ENCODE measurements at regions of chr19 and their contacts with region 1.

Region 1: GRCh38 chr19:58401840-58402469 is 6.5 kb upstream of the ZNF584 start:
- DNase-seq: no peak
- CTCF ChIP-seq: no peak

Region 2: DNA sequence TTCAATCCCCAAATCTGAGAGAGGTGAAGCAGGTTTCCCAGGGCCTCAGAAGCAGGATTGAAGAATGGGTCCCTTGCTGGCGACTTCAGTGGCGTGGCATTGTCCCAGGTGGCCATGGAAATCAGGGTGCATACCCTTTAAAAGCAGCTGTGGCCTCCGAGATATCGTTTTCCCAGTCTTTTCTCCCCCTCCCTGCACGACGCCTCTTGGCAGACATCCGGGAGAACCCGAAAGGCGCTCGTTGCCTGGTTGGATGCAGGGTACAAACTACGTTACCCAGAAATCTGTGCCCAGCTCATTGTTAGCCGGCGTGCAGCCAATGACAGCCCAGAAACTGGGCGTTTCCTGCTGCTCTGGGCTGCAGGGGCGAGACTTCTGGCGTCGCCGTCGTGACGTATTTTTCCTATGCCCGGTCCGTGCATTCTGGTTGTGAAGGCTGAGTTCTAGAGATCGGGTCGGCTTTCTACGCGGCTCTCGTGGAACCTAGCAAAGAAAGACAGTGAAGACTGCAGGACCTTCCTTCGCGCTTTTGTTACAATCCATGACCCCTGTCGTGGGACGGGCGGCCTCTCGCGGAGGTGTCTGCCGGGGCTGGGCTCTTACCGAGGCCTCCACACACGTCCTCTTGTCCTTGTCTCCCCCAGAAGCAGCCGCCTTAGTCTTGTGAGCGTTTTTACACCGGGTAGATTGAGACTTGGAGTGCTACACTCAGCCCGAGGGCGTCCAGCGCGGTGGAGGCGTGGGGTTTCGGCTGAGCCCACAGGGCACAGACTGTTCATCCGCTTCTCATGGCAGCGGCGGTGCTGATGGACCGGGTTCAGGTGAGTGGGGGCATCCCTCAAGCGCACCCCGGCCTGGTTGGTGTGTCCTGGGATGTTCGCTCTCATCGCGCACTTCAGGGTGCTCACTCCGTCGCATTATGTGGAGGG is 1050.8 kb before region 1 on chr19 and contains the start of gene ZNF304:
- CTCF ChIA-PET with region 1: no interaction called
- POLR2A ChIA-PET with region 1: interaction called, 14 read pairs
- DNase-seq: peak; percentile 96
- CTCF ChIP-seq: no peak

Measured in GM10248 (cell line).